Activated CD4-positive, alpha-beta T cell treated with anti-CD3 and anti-CD28 coated beads for 36 hours (primary cell): ENCODE measurements at regions of chr20 and their contacts with region 1.

Region 1: DNA sequence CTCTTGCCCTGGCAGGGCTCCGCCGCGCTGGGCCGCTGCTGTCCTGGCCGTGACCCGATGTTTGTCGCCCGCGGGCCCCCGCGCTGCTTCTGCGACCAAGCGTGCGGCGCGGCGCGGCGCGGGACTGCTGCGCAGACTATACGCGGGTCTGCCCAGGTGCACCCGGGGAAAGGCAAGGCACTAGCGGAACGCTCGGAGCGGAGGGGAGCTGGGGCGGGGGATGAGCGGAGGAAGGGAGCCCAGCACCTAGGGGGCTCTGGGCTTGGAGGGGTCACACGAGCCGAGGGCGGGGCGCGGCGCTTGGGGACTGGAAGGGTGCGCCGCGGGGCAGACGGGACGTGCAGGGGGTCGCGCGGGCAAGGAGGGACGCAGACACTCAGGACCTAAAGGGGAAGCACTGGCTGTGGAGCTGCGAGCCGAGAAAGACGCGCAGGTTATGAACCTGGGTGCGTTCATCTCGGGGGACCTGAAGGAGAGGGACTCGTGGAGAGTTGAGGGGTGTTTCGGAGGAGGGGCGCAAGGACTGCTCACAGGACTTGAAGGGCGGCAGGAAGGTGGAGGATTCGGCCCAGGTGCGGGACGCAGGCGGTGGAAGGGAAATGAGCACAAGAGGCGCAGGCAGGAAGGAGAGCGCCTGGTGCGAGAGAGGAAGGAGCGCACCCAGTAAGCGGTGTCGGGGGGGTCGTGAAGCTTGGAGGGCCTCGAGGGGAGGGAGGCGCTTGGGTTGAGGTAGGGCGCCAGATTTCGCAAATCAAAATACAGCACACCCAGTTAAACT is 40.8 kb upstream of the ZNFX1 start:
- DNase-seq: peak; percentile 31
- ATAC-seq: peak; percentile 40
- H3K4me3 Mint-ChIP-seq: peak overlapping the region; percentile 69
- H3K27ac Mint-ChIP-seq: peak overlapping the region; percentile 0
- H3K4me1 Mint-ChIP-seq: peaks cover 18% of the 10 kb centered on the region
- H3K27me3 Mint-ChIP-seq: peaks cover 43% of the 10 kb centered on the region

Region 2: DNA sequence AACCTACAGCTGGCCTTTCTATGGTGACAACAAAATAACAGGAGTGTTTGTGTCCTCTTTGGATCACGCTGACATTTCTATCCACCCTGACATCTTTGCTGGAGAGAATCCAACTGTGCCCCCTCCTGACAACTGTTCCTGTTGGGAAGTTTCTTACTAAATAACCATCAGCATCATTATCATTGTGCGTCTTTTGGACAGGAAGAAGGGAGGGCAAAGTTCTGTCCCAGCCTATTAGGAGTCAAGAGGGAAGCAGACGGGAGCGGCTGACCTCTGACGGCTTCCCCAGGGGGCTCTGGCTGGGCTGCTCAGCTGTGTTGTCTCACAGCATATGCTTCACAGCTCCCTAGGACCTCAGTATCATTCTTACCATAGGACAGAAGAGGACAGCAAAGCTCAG is 1337.4 kb before region 1 on chr20:
- CTCF ChIA-PET with region 1: no interaction called
- POLR2A ChIA-PET with region 1: no interaction called
- intact Hi-C with region 1: loop called in 1 of 2 experiments (anchors 5 kb)
- DNase-seq: no peak
- ATAC-seq: no peak
- H3K4me3 Mint-ChIP-seq: no peak overlapping the region
- H3K27ac Mint-ChIP-seq: no peak overlapping the region
- H3K4me1 Mint-ChIP-seq: peaks cover 7% of the 10 kb centered on the region
- H3K27me3 Mint-ChIP-seq: peaks cover 15% of the 10 kb centered on the region

Region 3: GRCh38 chr20:49344975-49345374 is 26.4 kb after region 1 on chr20:
- CTCF ChIA-PET with region 1: no interaction called
- POLR2A ChIA-PET with region 1: no interaction called
- intact Hi-C with region 1: no loop called
- DNase-seq: no peak
- ATAC-seq: no peak
- H3K4me3 Mint-ChIP-seq: no peak overlapping the region
- H3K27ac Mint-ChIP-seq: no peak overlapping the region
- H3K4me1 Mint-ChIP-seq: no peaks in the 10 kb centered on the region
- H3K27me3 Mint-ChIP-seq: peaks cover 6% of the 10 kb centered on the region